ENCODE measurements at regions of chr2 and their contacts with region 1.

Region 1: DNA sequence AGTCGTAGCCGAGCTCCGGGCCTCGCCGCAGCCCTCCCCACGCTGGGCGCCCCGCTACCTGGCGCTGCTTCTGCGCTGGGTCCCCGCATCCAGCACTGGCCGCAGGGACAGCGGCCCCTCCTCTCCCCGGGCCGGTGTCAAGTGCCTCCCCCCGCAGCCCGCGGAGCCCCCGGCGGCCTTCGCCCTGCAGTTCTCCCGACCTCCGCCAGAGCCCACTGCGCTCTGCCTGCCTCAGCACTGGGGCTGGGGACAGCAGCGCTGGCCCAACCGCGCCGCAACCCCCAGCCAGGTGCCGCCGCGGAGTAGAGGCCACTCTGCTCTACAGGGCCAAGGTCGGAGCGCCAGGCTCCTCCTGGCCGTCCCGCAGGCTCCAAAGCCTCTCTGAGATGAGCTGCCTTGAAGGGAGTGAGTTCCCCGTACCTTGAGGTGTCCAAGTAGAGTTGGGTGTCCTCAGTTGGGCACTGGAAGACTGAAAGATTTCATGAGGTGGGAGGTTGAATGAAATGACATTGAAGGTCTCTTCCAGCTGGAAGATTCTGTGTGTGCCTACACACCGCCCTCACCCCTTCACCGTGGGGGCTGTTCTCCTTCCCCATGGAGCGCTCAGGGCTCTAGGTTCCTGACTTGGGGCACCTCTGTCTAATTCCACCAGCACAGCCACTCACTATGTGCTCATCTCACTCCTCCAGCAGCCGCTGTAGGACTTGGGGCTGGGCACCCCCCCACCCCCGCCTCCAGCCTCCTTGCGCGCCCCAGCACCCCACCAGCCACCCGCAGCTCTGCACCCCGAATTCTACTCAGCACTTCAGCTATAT is 854 bp upstream of the DNMT3A start:
- DNase-seq: peak; percentile 82
- ATAC-seq: peak; percentile 92
- H3K4me3 Mint-ChIP-seq: peak overlapping the region; percentile 84
- H3K27ac Mint-ChIP-seq: peak overlapping the region; percentile 59
- H3K4me1 Mint-ChIP-seq: peaks cover 19% of the 10 kb centered on the region
- H3K27me3 Mint-ChIP-seq: peaks cover 1% of the 10 kb centered on the region
- CTCF ChIP-seq: peak; percentile 74

Region 2: DNA sequence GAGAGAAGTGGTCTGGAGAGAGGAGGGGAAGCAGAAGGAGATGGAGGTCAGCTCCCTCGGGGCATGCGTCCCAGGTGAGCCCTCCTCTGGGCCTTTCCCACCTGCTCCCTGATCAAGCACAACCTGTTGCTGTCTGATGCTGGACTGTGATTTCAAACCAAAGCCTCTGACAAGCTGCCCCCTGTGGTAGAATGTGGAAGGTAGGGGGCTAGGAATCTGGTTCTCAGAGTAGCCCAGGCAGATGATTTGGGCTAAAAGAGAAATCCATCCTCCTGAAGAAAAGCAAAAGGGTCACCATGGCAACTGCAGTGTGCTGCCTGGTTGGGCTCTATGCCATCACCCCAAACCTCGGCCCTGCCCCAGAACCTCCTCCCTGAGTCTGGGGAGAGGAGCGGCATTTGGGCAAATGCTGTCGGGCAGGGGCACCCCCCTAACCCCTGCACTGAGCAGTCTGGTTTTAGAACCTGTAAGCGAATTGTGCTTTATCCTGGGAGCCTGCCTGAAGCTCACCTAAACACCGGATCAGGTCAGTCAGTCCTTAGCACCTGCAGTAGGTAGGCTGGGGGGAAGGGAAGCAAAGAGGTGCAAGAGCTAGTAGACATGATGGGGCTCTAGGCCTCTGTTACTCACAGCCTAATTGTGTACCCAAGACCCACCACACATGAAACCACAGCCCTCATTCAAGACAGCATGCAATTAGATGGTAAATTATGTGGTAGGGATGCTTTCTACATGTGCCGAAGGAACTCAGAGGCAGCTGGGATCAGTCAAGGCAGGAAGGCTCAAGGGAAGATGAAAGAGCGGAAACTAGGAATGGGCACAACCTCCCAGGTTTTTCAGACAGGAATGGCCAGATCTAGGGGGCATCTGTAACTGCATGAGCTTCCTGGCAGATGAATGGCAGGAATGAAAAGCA is 84.4 kb before region 1 on chr2:
- CTCF ChIA-PET with region 1: no interaction called
- POLR2A ChIA-PET with region 1: no interaction called
- intact Hi-C with region 1: no loop called
- DNase-seq: no peak
- ATAC-seq: no peak
- H3K4me3 Mint-ChIP-seq: no peak overlapping the region
- H3K27ac Mint-ChIP-seq: no peak overlapping the region
- H3K4me1 Mint-ChIP-seq: peaks cover under 1% of the 10 kb centered on the region
- H3K27me3 Mint-ChIP-seq: no peaks in the 10 kb centered on the region
- CTCF ChIP-seq: no peak

Region 3: DNA sequence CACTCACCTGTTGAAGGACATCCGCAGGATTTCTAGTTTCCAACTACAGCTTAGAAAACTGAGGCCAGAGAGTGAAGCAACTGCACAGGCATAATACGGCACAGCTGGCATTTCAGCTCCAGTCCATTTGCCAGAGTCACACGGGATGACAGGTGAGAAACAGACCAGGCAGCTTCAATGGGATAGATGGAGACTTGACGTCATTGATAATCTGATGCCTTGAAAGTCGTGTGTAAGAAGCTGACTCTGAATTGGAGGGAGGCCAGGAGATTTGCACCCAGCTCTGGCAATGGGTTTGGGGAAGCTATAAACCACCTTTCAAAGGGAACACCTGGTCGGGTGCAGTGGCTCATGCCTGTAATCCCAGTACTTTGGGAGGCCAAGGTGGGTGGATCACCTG is 11.5 kb after region 1 on chr2:
- CTCF ChIA-PET with region 1: no interaction called
- POLR2A ChIA-PET with region 1: no interaction called
- intact Hi-C with region 1: no loop called
- DNase-seq: no peak
- ATAC-seq: no peak
- H3K4me3 Mint-ChIP-seq: no peak overlapping the region
- H3K27ac Mint-ChIP-seq: peak overlapping the region; percentile 6
- H3K4me1 Mint-ChIP-seq: peaks cover 8% of the 10 kb centered on the region
- H3K27me3 Mint-ChIP-seq: peaks cover 7% of the 10 kb centered on the region
- CTCF ChIP-seq: no peak

Region 4: GRCh38 chr2:25651071-25651470 is 308.5 kb after region 1 on chr2:
- CTCF ChIA-PET with region 1: no interaction called
- POLR2A ChIA-PET with region 1: no interaction called
- intact Hi-C with region 1: no loop called
- DNase-seq: no peak
- ATAC-seq: no peak
- H3K4me3 Mint-ChIP-seq: no peak overlapping the region
- H3K27ac Mint-ChIP-seq: no peak overlapping the region
- H3K4me1 Mint-ChIP-seq: no peaks in the 10 kb centered on the region
- H3K27me3 Mint-ChIP-seq: no peaks in the 10 kb centered on the region
- CTCF ChIP-seq: no peak

Region 5: DNA sequence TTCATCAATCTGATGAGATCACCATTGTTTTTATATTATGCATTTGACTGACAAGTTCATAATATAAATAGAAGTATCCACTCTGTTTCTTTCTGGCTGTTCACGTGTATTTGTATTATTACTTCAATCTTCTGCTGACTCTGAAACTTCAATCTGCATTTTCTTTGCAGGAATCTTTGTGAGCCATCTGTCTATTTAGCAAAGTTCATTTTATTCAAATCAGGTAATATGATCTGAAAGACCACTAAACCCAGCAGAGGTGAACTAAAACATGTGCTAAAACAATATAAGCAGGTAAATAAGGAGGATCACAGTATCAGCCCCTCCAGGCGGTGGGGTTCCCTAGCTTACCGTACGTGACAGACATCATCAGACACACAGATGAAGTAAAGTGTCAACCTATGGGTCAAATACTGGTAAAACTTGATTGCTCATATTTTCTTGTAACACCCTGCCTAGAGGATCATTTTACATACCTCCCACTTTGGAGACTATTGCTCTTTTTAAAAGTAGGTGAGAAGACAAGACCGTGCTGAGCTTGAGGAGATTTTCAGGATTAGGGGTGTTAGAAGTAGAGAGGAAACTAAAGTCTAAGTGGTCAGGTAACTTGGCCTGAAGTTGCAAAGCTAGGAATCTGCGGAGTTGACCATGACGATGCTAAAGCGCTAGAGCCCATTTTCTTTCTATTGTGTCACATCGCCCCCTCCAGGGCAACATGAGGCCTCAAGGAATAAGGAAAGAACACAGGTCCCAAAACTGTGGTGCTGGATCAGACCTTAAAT is 321.8 kb after region 1 on chr2:
- CTCF ChIA-PET with region 1: no interaction called
- POLR2A ChIA-PET with region 1: no interaction called
- intact Hi-C with region 1: loop called (anchors 1 kb)
- DNase-seq: no peak
- ATAC-seq: peak; percentile 42
- H3K4me3 Mint-ChIP-seq: peak overlapping the region; percentile 20
- H3K27ac Mint-ChIP-seq: no peak overlapping the region
- H3K4me1 Mint-ChIP-seq: peaks cover 7% of the 10 kb centered on the region
- H3K27me3 Mint-ChIP-seq: no peaks in the 10 kb centered on the region
- CTCF ChIP-seq: no peak

Region 6: DNA sequence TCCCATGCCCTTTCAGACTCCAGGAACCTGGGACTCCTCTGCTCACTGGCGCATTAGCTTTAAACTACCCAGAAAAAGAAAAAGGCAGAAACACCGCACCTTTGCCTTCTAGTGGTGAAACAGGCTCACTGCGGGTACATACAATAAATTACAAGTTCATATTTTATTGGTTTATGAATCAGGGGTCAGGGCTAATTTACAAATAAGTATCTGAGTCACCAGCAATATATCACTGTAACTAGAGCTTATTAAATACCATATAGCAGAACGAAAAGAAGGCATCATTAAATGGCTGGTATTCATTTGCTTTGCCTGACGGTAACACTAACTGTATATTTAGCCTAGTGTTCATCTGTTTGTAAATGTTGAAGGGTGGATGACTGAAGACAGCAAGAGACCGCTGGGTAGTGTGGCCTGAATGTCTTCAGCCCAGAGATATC is 357.7 kb after region 1 on chr2:
- CTCF ChIA-PET with region 1: no interaction called
- POLR2A ChIA-PET with region 1: no interaction called
- intact Hi-C with region 1: loop called (anchors 1 kb)
- DNase-seq: no peak
- ATAC-seq: peak; percentile 64
- H3K4me3 Mint-ChIP-seq: no peak overlapping the region
- H3K27ac Mint-ChIP-seq: no peak overlapping the region
- H3K4me1 Mint-ChIP-seq: no peaks in the 10 kb centered on the region
- H3K27me3 Mint-ChIP-seq: no peaks in the 10 kb centered on the region
- CTCF ChIP-seq: no peak